ENCODE measurements at regions of chr2 and their contacts with region 1.

Region 1: GRCh38 chr2:174771631-174772471 is 7.6 kb upstream of the CHRNA1 start:
- DNase-seq: peak; percentile 71
- H3K4me3 ChIP-seq: no peak overlapping the region
- H3K27ac ChIP-seq: no peak overlapping the region
- H3K4me1 ChIP-seq: no peaks in the 10 kb centered on the region
- H3K27me3 ChIP-seq: no peaks in the 10 kb centered on the region
- CTCF ChIP-seq: peak; percentile 84
- POLR2A ChIP-seq: no peak

Region 2: GRCh38 chr2:174697255-174697654 is 74.6 kb before region 1 on chr2:
- CTCF ChIA-PET with region 1: interaction called, 27 read pairs
- POLR2A ChIA-PET with region 1: no interaction called
- dilution Hi-C with region 1: no loop called
- intact Hi-C with region 1: no loop called
- DNase-seq: peak; percentile 57
- H3K4me3 ChIP-seq: no peak overlapping the region
- H3K27ac ChIP-seq: no peak overlapping the region
- H3K4me1 ChIP-seq: no peaks in the 10 kb centered on the region
- H3K27me3 ChIP-seq: peaks cover 9 to 11% of the 10 kb centered on the region in 2 experiments
- CTCF ChIP-seq: peak; percentile 79 to 89
- POLR2A ChIP-seq: no peak

Region 3: GRCh38 chr2:174827371-174828369 is 55.8 kb after region 1 on chr2:
- CTCF ChIA-PET with region 1: interaction called, 28 read pairs
- POLR2A ChIA-PET with region 1: no interaction called
- dilution Hi-C with region 1: no loop called
- intact Hi-C with region 1: no loop called
- DNase-seq: peak; percentile 82
- H3K4me3 ChIP-seq: peak overlapping the region in 1 of 3 experiments; percentile 6
- H3K27ac ChIP-seq: peak overlapping the region; percentile 93
- H3K4me1 ChIP-seq: peaks cover 35% of the 10 kb centered on the region
- H3K27me3 ChIP-seq: no peaks in the 10 kb centered on the region
- CTCF ChIP-seq: no peak
- POLR2A ChIP-seq: peak; percentile 53

Region 4: GRCh38 chr2:174897286-174897685 is 125.4 kb after region 1 on chr2:
- CTCF ChIA-PET with region 1: interaction called, 15 read pairs
- POLR2A ChIA-PET with region 1: no interaction called
- dilution Hi-C with region 1: no loop called
- intact Hi-C with region 1: no loop called
- DNase-seq: no peak
- H3K4me3 ChIP-seq: no peak overlapping the region
- H3K27ac ChIP-seq: no peak overlapping the region
- H3K4me1 ChIP-seq: no peaks in the 10 kb centered on the region
- H3K27me3 ChIP-seq: no peaks in the 10 kb centered on the region
- CTCF ChIP-seq: no peak
- POLR2A ChIP-seq: no peak

Region 5: GRCh38 chr2:174971865-174972781 is 200.3 kb after region 1 on chr2:
- CTCF ChIA-PET with region 1: interaction called, 26 read pairs
- POLR2A ChIA-PET with region 1: no interaction called
- dilution Hi-C with region 1: no loop called
- intact Hi-C with region 1: no loop called
- DNase-seq: peak; percentile 96
- H3K4me3 ChIP-seq: peak overlapping the region in 1 of 3 experiments; percentile 34
- H3K27ac ChIP-seq: peak overlapping the region; percentile 93
- H3K4me1 ChIP-seq: peaks cover 34% of the 10 kb centered on the region
- H3K27me3 ChIP-seq: no peaks in the 10 kb centered on the region
- CTCF ChIP-seq: no peak
- POLR2A ChIP-seq: no peak

Region 6: DNA sequence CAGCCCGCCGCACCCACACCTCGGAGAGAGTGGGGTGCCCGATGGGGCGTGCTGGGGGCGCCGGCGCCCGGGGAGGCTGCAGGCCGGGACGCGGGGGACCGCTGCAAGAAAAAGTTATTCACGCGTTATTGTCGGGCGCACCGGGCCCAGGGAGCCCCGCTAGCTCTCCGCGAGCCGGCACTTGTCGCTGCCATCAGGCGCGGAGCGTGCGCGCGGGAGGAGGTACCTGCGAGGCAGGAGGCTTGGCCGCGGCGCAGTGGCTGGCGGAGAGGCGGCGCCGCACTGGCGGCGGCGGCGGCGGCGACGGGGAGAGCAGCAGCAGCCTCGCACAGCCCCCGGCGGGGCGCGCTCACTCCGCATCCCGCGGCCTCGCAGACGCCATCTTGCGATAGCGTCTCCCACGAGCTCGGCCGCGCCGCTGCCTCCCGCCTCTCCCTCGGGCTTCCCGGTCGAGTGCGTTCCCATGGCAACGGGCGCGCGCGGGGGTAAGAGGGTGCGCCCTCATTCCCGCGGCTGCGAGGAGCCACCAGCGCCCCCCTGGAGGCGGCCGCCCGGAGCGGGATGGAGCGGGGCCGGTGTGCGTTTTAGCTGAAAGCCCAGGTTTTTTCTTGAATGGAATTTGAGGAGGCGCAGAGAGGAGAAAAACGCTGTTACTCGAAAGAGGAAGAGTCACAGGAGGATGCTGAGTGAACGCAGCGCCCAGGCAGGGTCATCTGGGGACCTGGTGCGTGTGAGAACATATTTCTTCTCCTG is 233.3 kb after region 1 on chr2 and contains the start of gene CHN1:
- CTCF ChIA-PET with region 1: interaction called, 35 read pairs
- POLR2A ChIA-PET with region 1: no interaction called
- dilution Hi-C with region 1: no loop called
- intact Hi-C with region 1: no loop called
- DNase-seq: peak; percentile 85
- H3K4me3 ChIP-seq: peak within 1 kb of the TSS; percentile 70 to 89 (median 83)
- H3K27ac ChIP-seq: peak within 1 kb of the TSS; percentile 35
- H3K4me1 ChIP-seq: peaks cover 18% of the 10 kb centered on the region
- H3K27me3 ChIP-seq: peaks cover 0 to 3% of the 10 kb centered on the region in 2 experiments
- CTCF ChIP-seq: no peak
- POLR2A ChIP-seq: peak; percentile 71
- total RNA-seq, gene CHN1: 23.3 and 29.0 TPM in 2 replicates

Region 7: GRCh38 chr2:175097297-175097696 is 325.4 kb after region 1 on chr2:
- CTCF ChIA-PET with region 1: no interaction called
- POLR2A ChIA-PET with region 1: no interaction called
- dilution Hi-C with region 1: no loop called
- intact Hi-C with region 1: loop called (anchors 10 kb)
- DNase-seq: no peak
- H3K4me3 ChIP-seq: no peak overlapping the region
- H3K27ac ChIP-seq: no peak overlapping the region
- H3K4me1 ChIP-seq: no peaks in the 10 kb centered on the region
- H3K27me3 ChIP-seq: no peaks in the 10 kb centered on the region
- CTCF ChIP-seq: no peak
- POLR2A ChIP-seq: no peak